Activated naive CD4-positive, alpha-beta T cell treated with anti-CD3 and anti-CD28 coated beads, Interleukin-2, amount 10 ng/mL, durations not matched to agents 7 days and 5 days (primary cell): ENCODE measurements at regions of chr9 and their contacts with region 1.

Region 1: DNA sequence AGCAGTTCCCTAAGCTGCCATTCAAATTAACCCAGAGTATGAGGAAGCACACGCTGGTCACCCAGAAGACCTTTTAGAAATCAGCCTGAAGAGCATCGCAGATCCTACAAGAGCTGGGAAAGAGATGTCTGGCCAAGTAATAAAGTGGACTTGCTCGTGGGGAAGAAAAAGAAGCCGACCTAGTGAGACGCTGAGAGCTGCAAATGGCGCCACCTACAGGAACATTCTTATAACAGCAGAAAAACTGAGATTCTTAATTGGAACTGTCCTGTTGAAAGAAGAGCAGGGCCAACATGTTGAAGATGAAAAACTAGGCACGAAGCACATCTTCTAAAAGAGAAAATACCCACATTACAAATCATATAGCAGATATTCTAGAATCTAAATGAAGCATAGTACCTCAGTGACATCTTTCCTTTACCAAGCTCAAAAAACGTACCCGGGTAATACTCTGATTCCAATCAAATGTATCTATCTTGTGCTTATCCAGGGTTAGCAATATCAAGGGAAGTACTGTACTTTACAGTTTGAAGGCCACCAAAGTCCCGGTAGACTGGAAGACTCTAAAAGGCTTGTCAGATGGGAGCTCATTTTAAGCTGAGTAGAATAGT is 3.9 kb upstream of the GNAQ start:
- DNase-seq: peak; percentile 64
- H3K4me3 Mint-ChIP-seq: no peak overlapping the region
- H3K27ac Mint-ChIP-seq: no peak overlapping the region
- H3K4me1 Mint-ChIP-seq: peaks cover 38% of the 10 kb centered on the region
- H3K27me3 Mint-ChIP-seq: peaks cover 6% of the 10 kb centered on the region

Region 2: GRCh38 chr9:77751341-77752091 is 284.0 kb before region 1 on chr9:
- CTCF ChIA-PET with region 1: interaction called, 17 read pairs
- DNase-seq: no peak
- H3K4me3 Mint-ChIP-seq: no peak overlapping the region
- H3K27ac Mint-ChIP-seq: no peak overlapping the region
- H3K4me1 Mint-ChIP-seq: peaks cover 14% of the 10 kb centered on the region
- H3K27me3 Mint-ChIP-seq: no peaks in the 10 kb centered on the region

Region 3: GRCh38 chr9:77841739-77842386 is 193.6 kb before region 1 on chr9:
- CTCF ChIA-PET with region 1: interaction called, 22 read pairs
- DNase-seq: no peak
- H3K4me3 Mint-ChIP-seq: no peak overlapping the region
- H3K27ac Mint-ChIP-seq: no peak overlapping the region
- H3K4me1 Mint-ChIP-seq: peaks cover 13% of the 10 kb centered on the region
- H3K27me3 Mint-ChIP-seq: no peaks in the 10 kb centered on the region

Region 4: GRCh38 chr9:77977210-77977611 is 58.3 kb before region 1 on chr9:
- CTCF ChIA-PET with region 1: interaction called, 150 read pairs
- DNase-seq: peak; percentile 75
- H3K4me3 Mint-ChIP-seq: no peak overlapping the region
- H3K27ac Mint-ChIP-seq: peak overlapping the region; percentile 26
- H3K4me1 Mint-ChIP-seq: peaks cover 54% of the 10 kb centered on the region
- H3K27me3 Mint-ChIP-seq: no peaks in the 10 kb centered on the region

Region 5: DNA sequence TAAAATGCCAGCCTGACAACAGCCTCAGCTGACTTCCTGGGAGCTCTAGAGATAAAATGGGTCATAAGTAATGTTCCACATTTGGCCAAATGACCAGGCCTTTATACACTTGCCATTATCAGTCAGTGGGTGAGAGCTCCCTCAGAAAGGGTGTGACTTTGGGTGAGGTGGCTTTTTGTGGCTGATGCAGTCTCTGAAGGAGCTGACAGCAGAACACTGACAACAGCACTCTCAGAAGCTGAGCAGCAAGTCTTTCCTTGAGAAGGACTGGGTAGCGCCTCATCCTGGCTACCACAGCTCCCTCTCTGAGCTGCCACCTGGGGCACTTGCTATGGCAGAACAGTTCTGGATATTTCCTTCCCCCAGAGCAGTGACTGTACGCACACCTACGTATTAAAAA is 18.1 kb after region 1 on chr9:
- CTCF ChIA-PET with region 1: interaction called, 13 read pairs
- DNase-seq: peak; percentile 30
- H3K4me3 Mint-ChIP-seq: no peak overlapping the region
- H3K27ac Mint-ChIP-seq: peak overlapping the region; percentile 29
- H3K4me1 Mint-ChIP-seq: peaks cover 26% of the 10 kb centered on the region
- H3K27me3 Mint-ChIP-seq: peaks cover 21% of the 10 kb centered on the region

Region 6: GRCh38 chr9:78073722-78074121 is 38.2 kb after region 1 on chr9:
- CTCF ChIA-PET with region 1: interaction called, 12 read pairs
- DNase-seq: no peak
- H3K4me3 Mint-ChIP-seq: no peak overlapping the region
- H3K27ac Mint-ChIP-seq: peak overlapping the region; percentile 94
- H3K4me1 Mint-ChIP-seq: peaks cover 50% of the 10 kb centered on the region
- H3K27me3 Mint-ChIP-seq: no peaks in the 10 kb centered on the region

Region 7: GRCh38 chr9:78121488-78121887 is 86.0 kb after region 1 on chr9:
- CTCF ChIA-PET with region 1: interaction called, 18 read pairs
- DNase-seq: peak; percentile 67
- H3K4me3 Mint-ChIP-seq: no peak overlapping the region
- H3K27ac Mint-ChIP-seq: no peak overlapping the region
- H3K4me1 Mint-ChIP-seq: peaks cover 38% of the 10 kb centered on the region
- H3K27me3 Mint-ChIP-seq: peaks cover 13% of the 10 kb centered on the region